Activated CD4-positive, alpha-beta T cell treated with anti-CD3 and anti-CD28 coated beads, Interleukin-2, amount 10 ng/mL, durations not matched to agents 7 days and 5 days (primary cell): ENCODE measurements at regions of chr6 and their contacts with region 1.

Region 1: GRCh38 chr6:118967243-118967642 is 32.3 kb upstream of the MCM9 start:
- DNase-seq: no peak
- H3K4me3 Mint-ChIP-seq: no peak overlapping the region
- H3K27ac Mint-ChIP-seq: no peak overlapping the region
- H3K4me1 Mint-ChIP-seq: no peaks in the 10 kb centered on the region
- H3K27me3 Mint-ChIP-seq: no peaks in the 10 kb centered on the region

Region 2: GRCh38 chr6:118788702-118789101 is 178.5 kb before region 1 on chr6:
- CTCF ChIA-PET with region 1: no interaction called
- POLR2A ChIA-PET with region 1: interaction called, 12 read pairs
- DNase-seq: no peak
- H3K4me3 Mint-ChIP-seq: no peak overlapping the region
- H3K27ac Mint-ChIP-seq: no peak overlapping the region
- H3K4me1 Mint-ChIP-seq: peaks cover 18% of the 10 kb centered on the region
- H3K27me3 Mint-ChIP-seq: no peaks in the 10 kb centered on the region